Breast epithelium (tissue), 4 donors: ENCODE measurements at regions of chr10 and their contacts with region 1.

Region 1: DNA sequence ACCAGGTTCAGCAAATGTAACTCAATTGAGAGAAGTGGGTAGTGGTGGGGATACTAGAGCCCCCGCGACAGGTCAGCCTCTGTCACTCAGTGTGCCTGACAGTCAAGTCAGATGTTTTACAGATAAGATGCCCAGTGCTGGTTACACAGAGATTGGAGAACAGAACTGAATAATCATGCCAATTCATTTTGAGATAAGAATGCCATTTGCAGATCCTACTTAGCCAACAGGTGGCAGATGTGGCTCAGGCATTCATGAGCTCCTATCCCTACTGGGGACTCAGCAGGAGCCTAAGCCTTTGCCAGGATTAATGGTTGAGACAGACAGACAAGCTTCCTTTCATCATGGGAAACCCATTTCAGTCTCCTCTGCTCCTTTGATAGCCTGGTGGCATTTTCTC is 137.8 kb downstream of the MAPK8 start:
- DNase-seq: no peak
- H3K4me3 ChIP-seq: no peak overlapping the region
- H3K27ac ChIP-seq: no peak overlapping the region
- H3K4me1 ChIP-seq: no peaks in the 10 kb centered on the region
- H3K27me3 ChIP-seq: no peaks in the 10 kb centered on the region
- CTCF ChIP-seq: no peak
- POLR2A ChIP-seq: no peak

Region 2: GRCh38 chr10:48463318-48464003 is 19.2 kb after region 1 on chr10:
- intact Hi-C with region 1: no loop called
- DNase-seq: peak; percentile 11 to 40
- H3K4me3 ChIP-seq: no peak overlapping the region
- H3K27ac ChIP-seq: no peak overlapping the region
- H3K4me1 ChIP-seq: no peaks in the 10 kb centered on the region
- H3K27me3 ChIP-seq: no peaks in the 10 kb centered on the region
- CTCF ChIP-seq: no peak
- POLR2A ChIP-seq: no peak

Region 3: GRCh38 chr10:49157229-49157628 is 713.0 kb after region 1 on chr10:
- intact Hi-C with region 1: loop called (anchors 5 kb)
- DNase-seq: no peak
- H3K4me3 ChIP-seq: no peak overlapping the region
- H3K27ac ChIP-seq: no peak overlapping the region
- H3K4me1 ChIP-seq: no peaks in the 10 kb centered on the region
- H3K27me3 ChIP-seq: no peaks in the 10 kb centered on the region
- CTCF ChIP-seq: no peak
- POLR2A ChIP-seq: no peak